Calu3 (cell line): ENCODE measurements at regions of chr3 and their contacts with region 1.

Region 1: GRCh38 chr3:138834359-138835212 is at the start of gene PIK3CB:
- DNase-seq: peak; percentile 99
- H3K4me3 Mint-ChIP-seq: peak within 1 kb of the TSS; percentile 82
- H3K27ac Mint-ChIP-seq: peak within 1 kb of the TSS; percentile 94
- H3K4me1 Mint-ChIP-seq: peaks cover 30% of the 10 kb centered on the region
- H3K27me3 Mint-ChIP-seq: no peaks in the 10 kb centered on the region
- CTCF ChIP-seq: no peak
- total RNA-seq, gene PIK3CB: 52.6 and 59.3 TPM in 2 replicates

Region 2: GRCh38 chr3:138824114-138824506 is 10.5 kb before region 1 on chr3:
- CTCF ChIA-PET with region 1: interaction called, 3 read pairs
- intact Hi-C with region 1: loop called (anchors 1 kb)
- DNase-seq: no peak
- H3K4me3 Mint-ChIP-seq: peak overlapping the region; percentile 25
- H3K27ac Mint-ChIP-seq: peak overlapping the region; percentile 71
- H3K4me1 Mint-ChIP-seq: peaks cover 35% of the 10 kb centered on the region
- H3K27me3 Mint-ChIP-seq: no peaks in the 10 kb centered on the region
- CTCF ChIP-seq: no peak

Region 3: GRCh38 chr3:138862924-138863775 is 28.6 kb after region 1 on chr3:
- CTCF ChIA-PET with region 1: interaction called, 6 read pairs
- intact Hi-C with region 1: loop called (anchors 1 kb)
- DNase-seq: peak; percentile 87
- H3K4me3 Mint-ChIP-seq: peak overlapping the region; percentile 52
- H3K27ac Mint-ChIP-seq: peak overlapping the region; percentile 94
- H3K4me1 Mint-ChIP-seq: peaks cover 34% of the 10 kb centered on the region
- H3K27me3 Mint-ChIP-seq: no peaks in the 10 kb centered on the region
- CTCF ChIP-seq: no peak